ENCODE measurements at regions of chr7 and their contacts with region 1.

Region 1: GRCh38 chr7:16129431-16130116 is 291.8 kb downstream of the CRPPA start:
- DNase-seq: peak; percentile 46 to 95
- H3K4me3 ChIP-seq: peak overlapping the region; percentile 17
- H3K27ac ChIP-seq: peak overlapping the region; percentile 90
- H3K4me1 ChIP-seq: peaks cover 35% of the 10 kb centered on the region
- H3K27me3 ChIP-seq: no peaks in the 10 kb centered on the region
- CTCF ChIP-seq: no peak

Region 2: GRCh38 chr7:16083931-16084330 is 45.6 kb before region 1 on chr7:
- CTCF ChIA-PET with region 1: interaction called, 4 read pairs
- POLR2A ChIA-PET with region 1: no interaction called
- intact Hi-C with region 1: loop called (anchors 1 kb)
- DNase-seq: peak in 1 of 2 experiments; percentile 81
- H3K4me3 ChIP-seq: no peak overlapping the region
- H3K27ac ChIP-seq: peak overlapping the region; percentile 3; the same call in 1 of the 2 replicates
- H3K4me1 ChIP-seq: peaks cover 15% of the 10 kb centered on the region
- H3K27me3 ChIP-seq: no peaks in the 10 kb centered on the region
- CTCF ChIP-seq: no peak

Region 3: GRCh38 chr7:16268821-16269768 is 139.5 kb after region 1 on chr7:
- CTCF ChIA-PET with region 1: no interaction called
- POLR2A ChIA-PET with region 1: interaction called, 4 read pairs
- intact Hi-C with region 1: loop called (anchors 1 kb)
- DNase-seq: peak; percentile 76 to 91
- H3K4me3 ChIP-seq: 0 out of 2 replicates have a peak overlapping the region, but pooled peaks have one; percentile 12
- H3K27ac ChIP-seq: 0 out of 2 replicates have a peak overlapping the region, but pooled peaks have one; percentile 10
- H3K4me1 ChIP-seq: peaks cover 35% of the 10 kb centered on the region
- H3K27me3 ChIP-seq: no peaks in the 10 kb centered on the region
- CTCF ChIP-seq: no peak

Region 4: DNA sequence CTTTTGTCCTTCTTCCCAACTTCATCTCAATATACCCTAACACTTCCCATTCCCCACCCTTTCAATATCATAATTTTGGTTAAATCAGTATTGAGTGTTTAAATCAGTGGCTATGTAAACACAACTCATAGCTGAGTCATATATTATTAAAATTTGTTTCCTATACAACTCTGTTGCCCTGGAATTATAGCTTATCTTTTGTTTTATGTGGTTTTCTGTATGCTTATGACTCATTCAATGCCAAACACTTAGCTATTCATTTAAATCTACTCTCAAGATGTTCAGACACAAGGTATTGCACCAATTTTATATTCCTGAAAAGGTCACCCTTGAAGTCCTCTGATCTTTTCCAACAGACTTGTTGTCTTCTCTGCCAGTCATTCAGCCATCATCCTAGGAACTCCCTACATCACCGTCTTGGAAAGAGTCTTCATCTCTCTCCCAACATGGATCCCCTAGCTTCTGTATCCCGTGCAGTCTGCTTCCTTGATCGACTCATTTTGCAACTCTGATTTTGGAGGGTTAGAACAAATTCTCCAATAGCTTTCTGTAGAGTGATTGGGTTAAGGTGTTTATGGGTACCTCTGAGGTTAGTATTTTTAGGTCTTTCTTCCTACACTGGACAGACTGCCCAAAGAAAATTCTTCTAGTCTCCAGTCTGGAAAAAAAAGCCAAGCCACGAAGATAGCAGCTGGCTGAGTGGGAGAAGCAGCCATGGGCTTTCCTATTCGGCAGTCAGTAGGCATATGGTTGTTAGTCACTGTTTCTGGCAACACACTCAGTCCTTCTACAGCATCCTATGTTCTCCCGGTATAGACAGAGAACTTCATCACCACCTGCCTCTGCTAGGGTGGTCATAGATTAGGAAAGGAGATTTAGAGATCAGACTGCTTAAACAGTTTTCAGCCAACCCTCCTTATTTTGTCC is 189.7 kb after region 1 on chr7:
- CTCF ChIA-PET with region 1: no interaction called
- POLR2A ChIA-PET with region 1: interaction called, 5 read pairs
- intact Hi-C with region 1: loop called (anchors 1 kb)
- DNase-seq: peak; percentile 22 to 98
- H3K4me3 ChIP-seq: 0 out of 2 replicates have a peak overlapping the region, but pooled peaks have one; percentile 1
- H3K27ac ChIP-seq: peak overlapping the region; percentile 61
- H3K4me1 ChIP-seq: peaks cover 36% of the 10 kb centered on the region
- H3K27me3 ChIP-seq: no peaks in the 10 kb centered on the region
- CTCF ChIP-seq: no peak

Region 5: DNA sequence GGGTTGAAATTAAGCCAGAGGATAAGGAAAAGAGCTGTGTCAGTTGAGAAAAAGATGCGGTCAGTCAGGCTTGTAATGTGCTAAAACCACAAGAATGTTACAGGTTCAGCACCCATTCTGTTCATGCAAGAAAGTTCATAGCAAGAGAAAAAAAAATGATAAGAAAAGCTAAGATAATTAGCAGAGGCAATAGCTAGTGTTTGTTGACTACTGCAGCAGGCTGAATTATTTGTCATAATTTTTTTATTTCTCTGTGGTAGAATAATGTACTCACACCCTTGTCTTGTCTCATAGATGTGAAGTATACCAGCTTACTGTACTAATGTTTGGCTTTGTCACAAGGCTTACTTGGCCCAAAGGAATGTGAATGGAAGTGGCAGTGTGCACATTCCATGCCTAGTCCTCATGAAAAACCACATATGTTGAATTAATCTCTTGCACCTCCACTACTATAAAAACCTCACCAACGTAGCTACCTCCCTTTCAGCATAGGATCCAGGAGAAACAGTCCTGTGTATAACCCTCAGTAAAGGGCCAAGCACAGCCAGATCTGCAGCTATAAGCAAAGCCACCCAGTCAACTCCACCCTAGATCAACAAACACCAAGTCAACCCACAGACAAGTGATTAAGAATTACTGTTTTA is 216.9 kb after region 1 on chr7:
- CTCF ChIA-PET with region 1: no interaction called
- POLR2A ChIA-PET with region 1: interaction called, 16 read pairs
- intact Hi-C with region 1: loop called (anchors 1 kb)
- DNase-seq: peak; percentile 60 to 98
- H3K4me3 ChIP-seq: no peak overlapping the region; the same call in 1 of the 2 replicates
- H3K27ac ChIP-seq: peak overlapping the region; percentile 80
- H3K4me1 ChIP-seq: peaks cover 37% of the 10 kb centered on the region
- H3K27me3 ChIP-seq: no peaks in the 10 kb centered on the region
- CTCF ChIP-seq: no peak

Region 6: DNA sequence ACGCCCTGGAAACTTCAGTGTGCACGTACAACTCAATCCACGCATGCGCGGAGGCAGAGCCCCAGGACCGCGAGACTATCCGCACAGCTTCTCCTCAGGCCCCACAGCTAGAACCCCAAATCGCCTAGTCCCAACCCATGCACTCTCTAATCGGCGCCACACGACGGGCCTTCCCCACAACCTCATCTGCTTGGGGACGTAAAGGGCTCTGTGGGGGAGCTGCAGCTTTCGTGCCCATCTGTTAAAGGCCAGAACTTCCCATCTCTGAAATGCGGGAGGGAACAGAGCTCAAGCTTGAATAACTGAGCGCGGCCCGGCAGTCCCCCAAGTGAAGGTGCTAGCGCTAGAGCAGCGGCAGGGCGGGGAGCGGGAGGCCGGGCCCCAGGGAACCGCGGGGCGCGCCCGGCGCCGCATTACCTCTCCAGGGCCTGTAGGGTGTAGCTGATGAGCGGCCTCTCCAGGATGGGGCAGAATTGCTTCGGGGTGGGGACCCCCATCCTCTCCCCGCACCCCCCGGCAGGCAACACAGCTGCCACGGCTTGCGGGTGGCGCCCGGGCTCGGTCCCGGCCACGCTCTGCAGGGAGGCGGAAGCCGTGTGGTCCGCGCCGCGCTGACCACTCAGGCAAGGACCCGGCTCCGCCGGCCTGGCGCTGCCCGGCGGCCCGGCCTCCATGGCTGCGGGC is 291.2 kb after region 1 on chr7:
- CTCF ChIA-PET with region 1: interaction called, 4 read pairs
- POLR2A ChIA-PET with region 1: interaction called, 15 read pairs
- intact Hi-C with region 1: loop called (anchors 1 kb)
- DNase-seq: peak; percentile 90 to 92
- H3K4me3 ChIP-seq: peak overlapping the region; percentile 68
- H3K27ac ChIP-seq: peak overlapping the region; percentile 89
- H3K4me1 ChIP-seq: peaks cover 56% of the 10 kb centered on the region
- H3K27me3 ChIP-seq: no peaks in the 10 kb centered on the region
- CTCF ChIP-seq: peak; percentile 53; the same call in 1 of the 2 replicates

Region 7: GRCh38 chr7:16428672-16429071 is 299.1 kb after region 1 on chr7:
- CTCF ChIA-PET with region 1: no interaction called
- POLR2A ChIA-PET with region 1: no interaction called
- intact Hi-C with region 1: loop called (anchors 2 kb)
- DNase-seq: peak in 1 of 2 experiments; percentile 67
- H3K4me3 ChIP-seq: no peak overlapping the region
- H3K27ac ChIP-seq: no peak overlapping the region
- H3K4me1 ChIP-seq: no peaks in the 10 kb centered on the region
- H3K27me3 ChIP-seq: no peaks in the 10 kb centered on the region
- CTCF ChIP-seq: no peak

Measured in PC-9 (cell line).